Lower lobe of right lung (tissue), 2 donors: ENCODE measurements at regions of chr15 and their contacts with region 1.

Region 1: DNA sequence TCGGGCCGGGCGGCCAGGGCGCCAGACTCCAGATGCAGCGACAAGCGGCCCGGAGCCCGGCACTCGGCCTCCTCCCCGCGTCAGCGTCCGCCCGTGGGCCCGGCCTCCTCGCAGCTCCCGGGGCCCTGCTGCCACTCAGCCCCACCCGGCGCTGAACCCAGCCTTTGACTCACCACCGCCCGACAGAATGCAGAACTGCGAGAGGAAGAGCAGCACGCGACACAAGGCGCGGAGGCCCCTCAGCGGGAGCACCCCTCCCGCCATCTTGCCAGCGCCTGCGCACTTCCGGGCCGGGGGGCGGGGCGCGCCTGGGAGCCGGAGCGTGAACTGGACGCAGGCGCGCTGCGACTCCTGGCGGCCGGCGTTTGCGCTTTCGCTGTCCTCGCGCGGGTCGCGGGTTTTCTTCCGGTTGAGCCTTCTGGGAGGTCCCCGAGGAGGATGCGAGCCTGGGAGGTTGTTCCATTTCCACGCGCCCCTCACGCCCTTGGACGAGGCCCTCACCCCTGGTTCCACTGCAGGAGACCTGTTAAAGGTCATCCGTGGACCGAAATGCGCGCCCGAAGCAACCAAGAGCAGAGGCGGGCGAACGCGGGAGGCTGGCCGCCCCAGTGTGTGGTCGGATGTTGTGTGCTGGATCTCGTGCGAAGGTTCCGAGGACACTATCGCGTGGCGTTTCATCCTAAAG is at the start of gene TM2D3:
- DNase-seq: peak; percentile 97
- ATAC-seq: peak; percentile 99
- H3K4me3 ChIP-seq: peak within 1 kb of the TSS; percentile 85
- H3K27ac ChIP-seq: peak within 1 kb of the TSS; percentile 98
- H3K4me1 ChIP-seq: peaks cover 35% of the 10 kb centered on the region
- H3K27me3 ChIP-seq: no peaks in the 10 kb centered on the region
- CTCF ChIP-seq: peak; percentile 87
- total RNA-seq, gene TM2D3: 49.2 TPM

Region 2: GRCh38 chr15:101294731-101295606 is 357.3 kb before region 1 on chr15 and contains the start of gene SNRPA1:
- intact Hi-C with region 1: loop called (anchors 10 kb)
- DNase-seq: peak; percentile 99
- ATAC-seq: peak; percentile 98
- H3K4me3 ChIP-seq: peak within 1 kb of the TSS; percentile 89
- H3K27ac ChIP-seq: peak within 1 kb of the TSS; percentile 96
- H3K4me1 ChIP-seq: peaks cover 24% of the 10 kb centered on the region
- H3K27me3 ChIP-seq: no peaks in the 10 kb centered on the region
- CTCF ChIP-seq: no peak
- total RNA-seq, gene SNRPA1: 35.4 TPM